ENCODE measurements at regions of chr2 and their contacts with region 1.

Region 1: GRCh38 chr2:106638043-106638442 is 150.9 kb downstream of the CD8B2 start:
- DNase-seq: no peak
- H3K4me3 ChIP-seq: no peak overlapping the region
- H3K27ac ChIP-seq: no peak overlapping the region
- H3K4me1 ChIP-seq: no peaks in the 10 kb centered on the region
- H3K27me3 ChIP-seq: no peaks in the 10 kb centered on the region
- CTCF ChIP-seq: peak in 3 of 4 experiments; percentile 44 to 48 (median 46)
- POLR2A ChIP-seq: no peak

Region 2: DNA sequence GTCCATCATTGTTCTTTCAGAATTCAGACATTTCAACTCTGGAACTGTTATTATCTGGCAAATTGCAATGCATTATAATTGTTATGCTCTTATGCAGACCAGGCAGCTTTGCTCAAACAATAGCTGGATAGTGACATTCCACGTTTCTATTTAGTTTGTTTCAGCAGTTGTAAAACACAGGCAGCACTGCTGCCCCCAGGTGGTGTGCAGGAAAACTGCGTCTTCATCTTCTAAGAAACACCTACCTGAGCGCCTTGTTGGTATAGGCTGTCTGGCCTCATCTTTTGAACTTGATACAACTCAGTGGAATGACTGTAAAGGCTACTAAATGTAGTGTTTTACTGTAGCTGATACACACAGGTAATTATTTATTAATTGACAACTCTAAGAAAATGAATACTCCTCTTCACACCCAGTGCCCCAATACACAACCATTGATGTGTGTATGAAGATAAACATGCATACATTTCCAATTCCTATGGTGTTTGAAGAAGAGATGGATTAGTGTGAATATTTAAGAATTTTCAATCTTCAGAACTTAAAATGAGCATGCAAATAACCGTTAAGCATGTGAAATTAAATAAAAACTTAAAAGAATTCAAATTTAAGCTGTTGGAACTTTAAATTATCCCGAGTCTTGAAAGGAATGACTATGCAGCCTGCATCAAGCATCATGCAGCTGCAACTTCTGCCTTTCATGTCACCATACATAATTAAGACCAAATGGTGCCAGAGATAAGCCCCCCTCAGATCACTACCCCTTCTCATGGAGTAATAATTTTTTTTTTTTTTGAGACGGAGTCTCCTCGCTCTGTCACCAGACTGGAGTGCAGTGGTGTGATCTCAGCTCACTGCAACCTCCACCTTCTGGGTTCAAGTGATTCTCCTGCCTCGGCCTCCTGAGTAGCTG is 65.2 kb before region 1 on chr2:
- intact Hi-C with region 1: no loop called
- DNase-seq: no peak
- H3K4me3 ChIP-seq: no peak overlapping the region
- H3K27ac ChIP-seq: no peak overlapping the region
- H3K4me1 ChIP-seq: peaks cover 2% of the 10 kb centered on the region
- H3K27me3 ChIP-seq: no peaks in the 10 kb centered on the region
- CTCF ChIP-seq: peak in 3 of 4 experiments; percentile 27 to 52 (median 50)
- POLR2A ChIP-seq: no peak

Region 3: DNA sequence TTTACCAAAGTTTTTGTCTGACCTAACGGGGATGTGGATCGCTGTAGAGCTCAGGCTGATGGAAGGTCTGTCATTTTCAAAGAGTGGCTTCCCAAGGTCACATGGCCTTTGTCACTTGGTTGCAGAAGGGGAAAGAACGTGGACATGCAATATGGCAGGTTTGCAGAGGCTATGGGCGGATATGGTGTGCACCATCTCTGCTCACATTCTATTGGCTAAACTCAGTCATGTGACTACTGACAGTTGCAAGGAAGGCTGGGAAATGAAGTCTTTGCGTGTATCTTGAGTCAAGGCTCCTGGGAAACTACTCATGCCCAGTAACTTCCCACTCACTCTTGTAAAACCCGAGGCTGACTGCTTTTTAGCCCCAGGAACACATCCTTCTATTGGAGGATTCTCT is 151.2 kb after region 1 on chr2:
- intact Hi-C with region 1: no loop called
- DNase-seq: no peak
- H3K4me3 ChIP-seq: no peak overlapping the region
- H3K27ac ChIP-seq: no peak overlapping the region
- H3K4me1 ChIP-seq: no peaks in the 10 kb centered on the region
- H3K27me3 ChIP-seq: no peaks in the 10 kb centered on the region
- CTCF ChIP-seq: no peak
- POLR2A ChIP-seq: no peak

Region 4: DNA sequence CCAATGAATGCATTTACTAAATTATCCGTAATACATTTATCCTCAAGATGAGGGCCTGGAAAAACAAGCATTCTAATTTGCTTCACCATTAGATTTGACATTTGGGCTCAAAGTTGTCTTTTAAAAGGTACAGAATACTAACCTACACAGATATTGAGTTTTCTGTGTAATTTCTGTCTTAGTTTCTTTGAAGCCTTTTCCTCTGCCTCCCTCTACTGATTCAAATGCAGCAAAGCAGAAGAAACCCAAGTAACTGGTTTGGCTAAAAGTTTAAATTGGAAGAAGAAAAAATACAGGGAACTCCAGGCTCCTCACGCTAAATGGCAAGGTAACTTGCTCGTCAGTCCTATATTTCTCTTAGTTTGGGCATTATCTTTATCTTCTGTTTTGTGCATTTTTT is 1294.9 kb after region 1 on chr2:
- intact Hi-C with region 1: loop called (anchors 5 kb)
- DNase-seq: no peak
- H3K4me3 ChIP-seq: no peak overlapping the region
- H3K27ac ChIP-seq: no peak overlapping the region
- H3K4me1 ChIP-seq: no peaks in the 10 kb centered on the region
- H3K27me3 ChIP-seq: no peaks in the 10 kb centered on the region
- CTCF ChIP-seq: peak in 1 of 4 experiments; percentile 33
- POLR2A ChIP-seq: no peak